Heart right ventricle (tissue), 16 donors: ENCODE measurements at regions of chr5 and their contacts with region 1.

Region 1: DNA sequence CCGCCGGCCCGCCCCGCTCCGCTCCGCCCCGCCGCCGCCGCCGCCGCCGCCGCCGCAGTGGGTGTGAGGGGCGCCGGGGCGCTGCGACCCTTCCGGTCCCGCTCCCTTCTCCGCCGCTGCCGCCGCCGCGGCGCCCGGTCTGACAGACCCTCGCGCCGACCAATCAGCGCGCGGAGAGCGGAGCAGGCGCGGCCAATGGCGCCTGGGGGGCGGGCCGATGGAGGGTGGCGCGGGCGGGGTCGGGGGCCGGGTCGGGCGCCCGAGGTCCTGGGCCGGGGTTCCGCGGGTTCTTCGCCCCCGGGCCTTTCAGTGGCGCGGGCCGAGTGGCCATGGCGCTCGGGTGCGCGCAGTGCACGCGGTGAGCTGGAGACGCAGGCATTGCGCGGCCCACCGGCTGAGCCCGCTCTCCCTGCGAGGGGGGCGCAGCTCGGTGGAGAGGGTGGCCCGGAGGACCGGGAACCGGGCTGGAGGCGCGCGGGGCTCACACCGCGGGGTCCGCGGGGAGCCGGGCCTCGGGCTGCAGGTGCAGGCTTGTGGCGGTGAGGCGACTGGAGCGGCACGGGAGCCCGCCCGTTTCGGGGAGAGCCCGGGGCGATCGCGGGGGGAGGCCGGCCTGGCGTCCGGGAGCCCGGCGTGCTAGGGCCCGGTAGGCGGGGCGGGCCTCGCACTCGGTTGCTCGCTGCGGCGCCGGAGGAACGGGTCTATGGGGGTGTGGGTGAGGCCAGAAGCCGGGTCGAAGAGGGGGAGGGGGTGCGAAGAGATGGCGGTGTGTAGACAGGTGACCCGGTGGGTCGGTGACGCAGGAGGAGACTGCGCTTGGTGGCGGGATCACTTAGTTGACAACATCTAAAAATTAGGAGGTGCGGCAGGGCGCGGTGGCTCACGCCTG is at the start of gene MAPK9:
- DNase-seq: peak; percentile 81 to 89
- ATAC-seq: peak; percentile 90 to 95 (median 91)
- H3K4me3 ChIP-seq: peak within 1 kb of the TSS; percentile 79 to 100 (median 94)
- H3K27ac ChIP-seq: peak within 1 kb of the TSS; percentile 38 to 98 (median 93)
- H3K4me1 ChIP-seq: peaks cover 4 to 31% (median 24%) of the 10 kb centered on the region in 9 donors
- H3K27me3 ChIP-seq: no peaks in the 10 kb centered on the region
- CTCF ChIP-seq: peak in 1 of 9 donors; percentile 5
- total RNA-seq, gene MAPK9: 30.2 to 47.4 (median 41.6) TPM

Region 2: DNA sequence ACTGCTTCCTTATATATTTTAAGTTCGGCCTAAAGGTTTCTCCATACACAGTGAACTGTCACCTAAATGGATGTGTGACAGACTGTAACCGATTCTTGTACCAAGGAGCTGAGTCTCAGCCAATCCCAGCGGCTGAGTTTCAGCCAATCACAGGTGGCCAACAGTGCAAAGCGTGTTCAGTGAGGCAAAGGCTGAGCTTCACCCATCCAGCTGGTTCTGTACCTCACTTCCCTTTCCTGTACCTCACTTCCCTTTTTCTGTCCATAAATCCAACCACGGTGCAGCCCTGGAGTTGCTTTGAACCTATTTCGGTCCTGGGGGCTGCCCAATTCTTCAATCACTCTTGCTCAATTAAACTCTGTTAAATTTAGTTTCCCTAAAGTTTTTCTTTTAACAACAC is 368.8 kb before region 1 on chr5:
- intact Hi-C with region 1: no loop called
- DNase-seq: no peak
- ATAC-seq: no peak
- H3K4me3 ChIP-seq: no peak overlapping the region
- H3K27ac ChIP-seq: no peak overlapping the region
- H3K4me1 ChIP-seq: no peaks in the 10 kb centered on the region
- H3K27me3 ChIP-seq: no peaks in the 10 kb centered on the region
- CTCF ChIP-seq: no peak

Region 3: GRCh38 chr5:180328296-180329137 is 36.3 kb after region 1 on chr5:
- intact Hi-C with region 1: loop called in 1 of 10 experiments (anchors 1 kb)
- DNase-seq: peak; percentile 70 to 81
- ATAC-seq: peak in 6 of 8 donors; percentile 33 to 61 (median 42)
- H3K4me3 ChIP-seq: no peak overlapping the region
- H3K27ac ChIP-seq: no peak overlapping the region
- H3K4me1 ChIP-seq: peaks cover 0 to 26% (median 0%) of the 10 kb centered on the region in 9 donors
- H3K27me3 ChIP-seq: peaks cover 0 to 20% (median 7%) of the 10 kb centered on the region in 7 donors
- CTCF ChIP-seq: peak; percentile 38 to 86 (median 72)

Region 4: DNA sequence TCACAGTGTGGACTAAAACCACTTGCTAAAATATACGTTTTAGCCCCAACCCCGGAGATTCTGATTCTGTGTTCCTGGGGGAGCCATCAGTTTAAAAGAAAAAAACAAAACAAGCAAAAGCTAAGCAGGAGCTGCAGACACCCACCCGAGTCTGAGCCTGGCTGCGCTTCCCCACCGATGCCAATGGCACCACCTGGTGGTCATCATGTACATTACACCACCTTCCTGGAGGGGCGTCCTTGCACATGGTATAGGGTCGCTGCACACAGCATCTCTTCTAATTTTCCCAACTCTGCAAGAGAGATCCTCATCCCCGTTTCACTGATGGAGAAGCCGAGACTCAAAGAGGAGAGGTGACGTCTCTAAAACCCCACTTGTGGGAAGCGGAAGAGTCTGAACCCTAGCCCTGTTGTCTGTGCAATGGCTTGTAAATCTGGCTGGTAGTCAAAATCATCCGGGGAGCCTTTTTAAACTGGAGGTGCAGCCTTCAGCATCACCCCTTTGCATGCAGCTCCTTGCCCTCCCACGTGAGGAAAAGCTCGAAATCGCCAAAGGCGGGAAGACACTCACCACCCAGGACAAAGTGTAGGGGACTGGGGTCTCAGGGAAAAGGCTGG is 178.9 kb after region 1 on chr5:
- intact Hi-C with region 1: loop called (anchors 1 to 2 kb)
- DNase-seq: peak in 1 of 2 donors; percentile 55
- ATAC-seq: peak in 7 of 8 donors; percentile 60 to 85 (median 76)
- H3K4me3 ChIP-seq: no peak overlapping the region
- H3K27ac ChIP-seq: no peak overlapping the region
- H3K4me1 ChIP-seq: peaks cover 0 to 18% (median 0%) of the 10 kb centered on the region in 9 donors
- H3K27me3 ChIP-seq: peaks cover 0 to 27% (median 16%) of the 10 kb centered on the region in 7 donors
- CTCF ChIP-seq: peak; percentile 77 to 96 (median 93)

Region 5: GRCh38 chr5:180494060-180494509 is 201.9 kb after region 1 on chr5 and contains the start of gene CNOT6:
- intact Hi-C with region 1: loop called in 1 of 10 experiments (anchors 5 kb)
- DNase-seq: peak; percentile 92 to 94
- ATAC-seq: peak; percentile 99 to 100 (median 99)
- H3K4me3 ChIP-seq: peak within 1 kb of the TSS; percentile 75 to 99 (median 98)
- H3K27ac ChIP-seq: peak within 1 kb of the TSS; percentile 82 to 95 (median 92)
- H3K4me1 ChIP-seq: peaks cover 0 to 41% (median 25%) of the 10 kb centered on the region in 9 donors
- H3K27me3 ChIP-seq: no peaks in the 10 kb centered on the region
- CTCF ChIP-seq: no peak
- total RNA-seq, gene CNOT6: 9.4 to 20.5 (median 14.0) TPM

Region 6: GRCh38 chr5:180670586-180671359 is 378.6 kb after region 1 on chr5:
- intact Hi-C with region 1: loop called in 2 of 10 experiments (anchors 2 to 10 kb)
- DNase-seq: peak; percentile 53 to 57
- ATAC-seq: peak; percentile 34 to 83 (median 76)
- H3K4me3 ChIP-seq: no peak overlapping the region
- H3K27ac ChIP-seq: no peak overlapping the region
- H3K4me1 ChIP-seq: peaks cover 0 to 8% (median 0%) of the 10 kb centered on the region in 9 donors
- H3K27me3 ChIP-seq: peaks cover 9 to 32% (median 25%) of the 10 kb centered on the region in 7 donors
- CTCF ChIP-seq: peak; percentile 46 to 84 (median 72)

Region 7: GRCh38 chr5:180718810-180719453 is 426.7 kb after region 1 on chr5:
- intact Hi-C with region 1: loop called in 1 of 10 experiments (anchors 5 kb)
- DNase-seq: no peak
- ATAC-seq: no peak
- H3K4me3 ChIP-seq: no peak overlapping the region
- H3K27ac ChIP-seq: no peak overlapping the region
- H3K4me1 ChIP-seq: no peaks in the 10 kb centered on the region
- H3K27me3 ChIP-seq: peaks cover 0 to 24% (median 13%) of the 10 kb centered on the region in 7 donors
- CTCF ChIP-seq: peak in 8 of 9 donors; percentile 12 to 68 (median 55)